Psoas muscle (tissue), 8 donors: ENCODE measurements at regions of chr9 and their contacts with region 1.

Region 1: GRCh38 chr9:91949946-91950664 is at the start of gene ROR2:
- DNase-seq: peak; percentile 61 to 67
- ATAC-seq: peak; percentile 42 to 82 (median 72)
- H3K4me3 ChIP-seq: peak within 1 kb of the TSS; percentile 45
- H3K27ac ChIP-seq: no peak within 1 kb of the TSS
- H3K4me1 ChIP-seq: no peaks in the 10 kb centered on the region
- H3K27me3 ChIP-seq: peaks cover 0 to 79% (median 25%) of the 10 kb centered on the region in 3 donors
- CTCF ChIP-seq: peak; percentile 32
- total RNA-seq, gene ROR2: 0.11 to 0.52 (median 0.22) TPM

Region 2: GRCh38 chr9:91775011-91775707 is 174.9 kb before region 1 on chr9:
- intact Hi-C with region 1: loop called (anchors 10 kb)
- DNase-seq: peak; percentile 54 to 71
- ATAC-seq: peak; percentile 28 to 91 (median 66)
- H3K4me3 ChIP-seq: no peak overlapping the region
- H3K27ac ChIP-seq: no peak overlapping the region
- H3K4me1 ChIP-seq: no peaks in the 10 kb centered on the region
- H3K27me3 ChIP-seq: peaks cover 0 to 20% (median 0%) of the 10 kb centered on the region in 3 donors
- CTCF ChIP-seq: peak; percentile 65

Region 3: DNA sequence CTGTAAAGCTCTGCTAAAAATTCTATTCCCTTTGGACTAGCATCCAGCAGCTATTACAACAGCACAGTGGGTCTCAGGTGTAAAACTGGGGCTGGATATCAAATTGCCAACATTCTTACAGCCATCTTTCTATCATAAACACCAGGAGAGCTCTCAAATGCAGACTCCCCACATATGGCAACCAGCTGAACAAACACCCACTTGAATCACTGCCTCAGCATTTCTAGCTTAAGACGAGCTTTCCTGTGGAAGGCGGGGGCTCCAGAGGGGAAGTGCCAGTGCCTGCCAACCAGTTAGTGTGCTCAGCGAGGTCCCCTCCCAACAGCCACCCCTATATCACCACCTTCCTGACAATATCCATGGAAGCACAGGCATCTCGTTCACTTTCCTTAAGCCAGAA is 657.7 kb after region 1 on chr9:
- intact Hi-C with region 1: no loop called
- DNase-seq: no peak
- ATAC-seq: no peak
- H3K4me3 ChIP-seq: no peak overlapping the region
- H3K27ac ChIP-seq: no peak overlapping the region
- H3K4me1 ChIP-seq: no peaks in the 10 kb centered on the region
- H3K27me3 ChIP-seq: no peaks in the 10 kb centered on the region
- CTCF ChIP-seq: no peak